ENCODE measurements at regions of chr11 and their contacts with region 1.

Region 1: DNA sequence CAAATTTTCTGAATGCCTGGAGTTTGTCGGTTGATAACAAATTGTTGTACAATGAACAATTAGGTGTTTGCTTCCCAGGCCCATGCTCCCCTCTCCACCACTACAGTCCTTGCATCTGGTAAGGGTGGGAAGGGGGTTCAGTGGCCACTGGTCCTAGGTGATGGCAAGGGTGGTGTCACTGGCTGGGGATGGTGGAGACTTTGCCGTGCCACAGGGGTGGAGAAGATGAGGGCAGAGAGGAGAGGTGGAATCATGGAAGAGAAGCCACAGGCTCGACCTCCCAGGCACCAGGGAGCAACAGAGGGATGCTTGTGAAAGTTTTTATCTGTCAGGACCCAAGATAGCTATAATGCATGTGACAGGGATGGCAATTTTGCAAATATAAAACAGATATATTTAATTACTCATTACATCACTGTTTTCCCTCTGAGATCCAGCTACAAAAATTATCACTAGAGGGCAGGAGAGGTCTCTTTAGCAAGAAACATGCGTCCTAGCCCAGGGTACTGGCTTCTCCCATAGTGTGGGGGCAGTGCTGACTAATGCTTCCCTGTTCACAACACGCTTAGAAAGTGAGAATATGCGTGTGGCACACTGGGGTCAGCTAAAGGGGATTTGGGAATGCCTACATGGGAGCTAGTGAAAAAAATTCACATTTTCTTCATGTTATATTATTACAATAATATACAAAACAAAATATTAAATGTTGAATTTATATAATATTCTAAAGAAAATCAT is 49.0 kb upstream of the AMPD3 start:
- DNase-seq: peak; percentile 79 to 90 (median 82)
- ATAC-seq: peak; percentile 98
- H3K4me3 ChIP-seq: no peak overlapping the region
- H3K27ac ChIP-seq: 0 out of 3 replicates have a peak overlapping the region, but pooled peaks have one; percentile 26
- H3K4me1 ChIP-seq: peaks cover 9 to 18% of the 10 kb centered on the region in 2 experiments; a peak in 4 of 5 replicates
- H3K27me3 ChIP-seq: peaks cover 0 to 5% of the 10 kb centered on the region in 2 experiments; a peak in 1 of 5 replicates
- CTCF ChIP-seq: peak; percentile 81 to 97 (median 95)
- EP300 ChIP-seq: peak; percentile 19; the same call in 1 of the 2 replicates
- POLR2A ChIP-seq: no peak
- RAD21 ChIP-seq: peak; percentile 92 to 96

Region 2: DNA sequence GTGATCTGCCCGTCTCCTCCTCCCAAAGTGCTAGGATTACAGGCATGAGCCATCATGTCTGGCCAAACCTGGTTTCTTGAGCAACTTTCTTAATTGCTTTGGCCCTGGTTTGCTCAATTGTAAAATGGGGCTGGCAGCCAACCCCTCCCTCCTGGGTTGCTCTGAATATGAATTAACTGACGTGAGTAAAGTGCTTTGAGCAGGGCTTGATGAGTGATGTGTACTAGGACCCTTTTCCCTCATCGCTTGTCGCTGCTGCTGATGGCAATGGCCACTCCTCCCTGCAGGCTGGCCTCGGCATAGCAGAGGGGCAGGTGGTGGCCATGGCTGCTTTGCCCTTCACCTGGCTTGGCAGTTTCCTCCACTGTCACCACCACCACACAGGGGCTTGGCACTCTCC is 93.4 kb after region 1 on chr11:
- CTCF ChIA-PET with region 1: no interaction called
- POLR2A ChIA-PET with region 1: no interaction called
- in situ Hi-C with region 1: loop called (anchors 5 kb)
- intact Hi-C with region 1: no loop called
- DNase-seq: no peak
- ATAC-seq: no peak
- H3K4me3 ChIP-seq: no peak overlapping the region
- H3K27ac ChIP-seq: no peak overlapping the region
- H3K4me1 ChIP-seq: no peaks in the 10 kb centered on the region
- H3K27me3 ChIP-seq: no peaks in the 10 kb centered on the region
- CTCF ChIP-seq: no peak
- EP300 ChIP-seq: no peak
- POLR2A ChIP-seq: no peak
- RAD21 ChIP-seq: no peak

Region 3: GRCh38 chr11:10540923-10541560 is 135.0 kb after region 1 on chr11 and contains the start of gene RNF141:
- CTCF ChIA-PET with region 1: interaction called, 4 read pairs
- POLR2A ChIA-PET with region 1: no interaction called
- in situ Hi-C with region 1: no loop called
- intact Hi-C with region 1: loop called (anchors 2 kb)
- DNase-seq: peak; percentile 95 to 97 (median 96)
- ATAC-seq: peak; percentile 97
- H3K4me3 ChIP-seq: peak within 1 kb of the TSS; percentile 74
- H3K27ac ChIP-seq: peak within 1 kb of the TSS; percentile 86
- H3K4me1 ChIP-seq: peaks cover 8 to 11% of the 10 kb centered on the region in 2 experiments; a peak in 4 of 5 replicates
- H3K27me3 ChIP-seq: no peaks in the 10 kb centered on the region
- CTCF ChIP-seq: peak; percentile 87 to 93 (median 87)
- EP300 ChIP-seq: no peak
- POLR2A ChIP-seq: peak; percentile 96
- RAD21 ChIP-seq: no peak; a peak in 2 of 4 replicates
- polyA plus RNA-seq, gene RNF141: 44.6 to 51.9 TPM

Region 4: DNA sequence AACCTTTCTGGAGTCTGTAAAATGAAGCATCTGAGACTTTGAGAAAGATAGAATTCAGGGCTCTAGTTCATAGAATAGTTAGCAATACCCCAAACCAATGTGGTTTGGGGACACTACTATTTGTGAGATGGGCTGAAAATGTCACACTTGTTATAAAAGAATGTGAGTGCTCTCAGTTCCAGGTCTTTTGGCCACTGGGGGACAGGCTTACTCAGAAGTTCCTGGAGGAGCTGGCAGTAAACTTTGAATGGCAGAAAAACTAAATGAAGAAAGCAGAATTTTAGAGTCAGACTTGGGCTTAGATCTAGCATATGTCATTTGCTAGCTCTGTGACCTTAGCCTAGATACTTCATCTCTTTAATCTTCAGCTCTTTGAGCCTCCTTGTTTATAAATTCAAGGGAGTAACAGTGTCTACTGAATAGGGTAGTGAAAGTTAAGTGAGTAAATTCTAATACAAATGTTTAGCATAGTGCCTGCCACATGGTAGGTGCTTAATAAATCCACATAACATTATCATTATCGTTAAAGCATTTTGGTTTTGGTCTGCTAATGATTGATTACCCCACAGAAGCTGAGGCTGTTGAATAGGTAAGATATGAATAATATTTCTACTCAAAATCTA is 158.8 kb after region 1 on chr11:
- CTCF ChIA-PET with region 1: interaction called, 3 read pairs
- POLR2A ChIA-PET with region 1: no interaction called
- in situ Hi-C with region 1: no loop called
- intact Hi-C with region 1: loop called (anchors 2 kb)
- DNase-seq: peak in 1 of 4 experiments; percentile 25
- ATAC-seq: peak; percentile 67
- H3K4me3 ChIP-seq: no peak overlapping the region
- H3K27ac ChIP-seq: no peak overlapping the region
- H3K4me1 ChIP-seq: peaks cover 0 to 6% of the 10 kb centered on the region in 2 experiments; a peak in 2 of 5 replicates
- H3K27me3 ChIP-seq: no peaks in the 10 kb centered on the region
- CTCF ChIP-seq: peak; percentile 45 to 66 (median 49)
- EP300 ChIP-seq: no peak
- POLR2A ChIP-seq: no peak
- RAD21 ChIP-seq: peak; percentile 81 to 82

Region 5: DNA sequence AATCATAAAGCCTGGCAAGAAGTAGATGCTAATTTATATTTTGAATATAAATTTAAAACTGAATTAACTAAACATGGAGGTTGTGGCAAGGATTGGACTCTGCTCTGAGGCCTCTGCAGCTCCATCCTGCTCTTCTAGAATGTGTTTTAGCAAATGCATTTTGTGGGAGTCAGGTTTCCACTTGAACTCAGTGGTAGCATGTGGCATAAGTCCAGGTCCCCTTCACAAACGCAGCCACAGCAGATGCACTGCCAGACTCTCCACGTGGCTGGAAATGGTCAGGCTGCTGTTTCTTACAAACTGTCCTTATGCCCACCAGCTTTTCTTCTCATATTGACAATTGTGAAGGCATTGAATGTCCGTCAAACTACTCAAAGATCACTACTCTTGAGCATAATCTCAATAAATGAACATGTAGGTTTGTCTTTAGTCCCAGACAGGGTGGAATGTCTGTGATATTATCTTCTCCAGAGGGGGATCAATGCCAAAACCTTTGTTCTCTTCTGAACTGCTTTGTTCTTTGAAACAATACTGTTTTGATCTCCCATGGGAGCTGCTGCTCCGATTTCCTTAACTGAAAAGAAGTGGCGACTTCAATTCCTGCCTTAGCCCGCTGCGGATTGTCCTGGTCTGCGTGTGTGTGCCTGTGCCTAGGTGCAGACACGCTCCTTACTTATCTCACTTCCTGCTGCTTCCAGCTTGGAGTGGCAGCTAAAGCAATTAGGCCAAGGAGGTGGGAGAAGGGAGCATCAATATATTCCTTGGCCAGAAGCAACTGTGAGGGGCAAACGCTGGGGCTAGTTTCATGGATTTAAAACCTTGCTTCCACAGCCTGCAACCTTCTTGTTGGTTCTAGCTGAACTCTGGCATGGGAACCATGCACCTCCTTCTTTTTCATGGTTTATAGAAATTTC is 378.5 kb after region 1 on chr11:
- CTCF ChIA-PET with region 1: no interaction called
- POLR2A ChIA-PET with region 1: no interaction called
- in situ Hi-C with region 1: no loop called
- intact Hi-C with region 1: no loop called
- DNase-seq: no peak
- ATAC-seq: peak; percentile 45
- H3K4me3 ChIP-seq: no peak overlapping the region
- H3K27ac ChIP-seq: no peak overlapping the region
- H3K4me1 ChIP-seq: no peaks in the 10 kb centered on the region
- H3K27me3 ChIP-seq: no peaks in the 10 kb centered on the region
- CTCF ChIP-seq: no peak
- EP300 ChIP-seq: no peak
- POLR2A ChIP-seq: no peak
- RAD21 ChIP-seq: no peak